ENCODE measurements at regions of chr2 and their contacts with region 1.

Region 1: GRCh38 chr2:25825238-25825637 is 53.0 kb downstream of the ASXL2 start:
- DNase-seq: peak; percentile 26
- H3K4me3 Mint-ChIP-seq: peak overlapping the region; percentile 50
- H3K27ac Mint-ChIP-seq: peak overlapping the region; percentile 69
- H3K4me1 Mint-ChIP-seq: peaks cover 69% of the 10 kb centered on the region
- H3K27me3 Mint-ChIP-seq: no peaks in the 10 kb centered on the region

Region 2: DNA sequence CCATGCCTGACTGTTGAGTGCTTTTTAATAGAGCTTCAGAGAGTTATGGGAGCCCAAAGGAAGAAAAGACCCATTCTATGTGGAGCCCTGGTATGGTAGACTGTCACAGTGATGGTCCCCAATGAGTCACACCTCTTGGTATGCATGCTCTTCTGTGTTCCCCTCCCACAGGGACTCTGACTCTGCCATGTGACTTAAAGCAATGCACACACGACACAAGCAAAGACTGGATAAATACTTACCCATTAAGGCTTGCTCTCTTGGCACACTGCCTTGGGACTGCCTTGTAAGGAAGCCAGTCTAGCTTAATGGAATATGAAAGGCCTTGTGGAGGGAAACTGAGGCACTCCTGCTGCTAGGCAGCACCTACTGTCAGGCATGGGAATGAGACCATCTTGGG is 135.2 kb before region 1 on chr2:
- intact Hi-C with region 1: no loop called
- DNase-seq: no peak
- H3K4me3 Mint-ChIP-seq: no peak overlapping the region
- H3K27ac Mint-ChIP-seq: no peak overlapping the region
- H3K4me1 Mint-ChIP-seq: no peaks in the 10 kb centered on the region
- H3K27me3 Mint-ChIP-seq: no peaks in the 10 kb centered on the region

Region 3: GRCh38 chr2:26068602-26069298 is 243.5 kb after region 1 on chr2:
- intact Hi-C with region 1: loop called (anchors 2 kb)
- DNase-seq: peak; percentile 64
- H3K4me3 Mint-ChIP-seq: peak overlapping the region; percentile 27
- H3K27ac Mint-ChIP-seq: peak overlapping the region; percentile 93
- H3K4me1 Mint-ChIP-seq: peaks cover 68% of the 10 kb centered on the region
- H3K27me3 Mint-ChIP-seq: no peaks in the 10 kb centered on the region